Tibial artery (tissue), 4 donors: ENCODE measurements at regions of chr7 and their contacts with region 1.

Region 1: GRCh38 chr7:26143298-26144048 is 8.5 kb upstream of the NFE2L3 start:
- DNase-seq: no peak
- H3K4me3 ChIP-seq: no peak overlapping the region
- H3K27ac ChIP-seq: no peak overlapping the region
- H3K4me1 ChIP-seq: peaks cover 0 to 5% (median 0%) of the 10 kb centered on the region in 4 donors
- H3K27me3 ChIP-seq: no peaks in the 10 kb centered on the region
- CTCF ChIP-seq: no peak

Region 2: DNA sequence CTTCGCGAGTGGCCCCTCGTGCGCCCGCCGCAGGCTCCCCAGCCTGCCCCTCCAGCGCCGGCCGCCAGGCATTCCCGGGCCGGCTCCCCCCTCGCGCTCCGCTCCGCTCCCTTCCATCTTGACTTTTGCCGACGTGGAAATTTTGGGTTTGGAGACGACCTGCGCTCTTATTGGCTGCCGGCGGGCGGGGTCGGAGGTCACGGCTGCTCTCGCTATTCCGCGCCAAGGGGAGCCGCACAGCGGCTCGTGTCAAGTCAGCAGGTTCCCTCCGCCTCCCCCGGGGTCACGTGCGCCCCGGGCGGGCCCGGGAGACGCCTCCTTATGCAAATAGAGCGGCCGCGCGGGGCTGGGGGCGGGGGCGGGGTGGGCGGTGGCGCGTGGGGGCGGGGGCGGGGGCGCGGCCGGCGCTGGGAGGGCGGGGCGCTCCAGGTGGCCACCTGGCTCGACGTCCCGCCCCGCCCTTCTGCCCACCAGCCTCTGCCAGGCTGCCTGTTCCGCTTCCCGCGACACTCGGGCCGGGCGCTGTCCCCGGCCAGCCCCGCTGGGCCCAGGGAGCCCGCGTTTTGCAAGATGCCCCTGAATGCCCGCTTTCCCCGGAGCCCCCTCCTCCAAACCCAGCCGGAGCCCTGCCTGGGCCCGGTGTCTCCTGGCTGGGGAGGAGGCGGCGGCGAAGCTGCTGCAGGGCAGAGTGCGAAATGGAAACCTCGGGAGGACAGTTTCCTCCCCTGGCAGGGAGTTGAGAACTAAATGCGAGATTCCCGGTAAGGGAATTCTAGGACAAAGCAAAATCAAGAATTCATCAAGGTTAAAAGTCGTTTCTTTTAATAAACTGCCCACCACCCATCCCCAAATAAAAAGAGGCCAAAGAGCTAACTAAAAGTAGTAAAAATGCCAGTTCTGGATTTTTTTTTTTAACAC is 192.2 kb before region 1 on chr7:
- intact Hi-C with region 1: no loop called
- DNase-seq: peak; percentile 88 to 90
- H3K4me3 ChIP-seq: peak overlapping the region; percentile 51 to 85
- H3K27ac ChIP-seq: peak overlapping the region; percentile 24 to 62
- H3K4me1 ChIP-seq: peaks cover 0 to 26% (median 18%) of the 10 kb centered on the region in 4 donors
- H3K27me3 ChIP-seq: peaks cover 0 to 5% of the 10 kb centered on the region in 2 donors
- CTCF ChIP-seq: no peak

Region 3: DNA sequence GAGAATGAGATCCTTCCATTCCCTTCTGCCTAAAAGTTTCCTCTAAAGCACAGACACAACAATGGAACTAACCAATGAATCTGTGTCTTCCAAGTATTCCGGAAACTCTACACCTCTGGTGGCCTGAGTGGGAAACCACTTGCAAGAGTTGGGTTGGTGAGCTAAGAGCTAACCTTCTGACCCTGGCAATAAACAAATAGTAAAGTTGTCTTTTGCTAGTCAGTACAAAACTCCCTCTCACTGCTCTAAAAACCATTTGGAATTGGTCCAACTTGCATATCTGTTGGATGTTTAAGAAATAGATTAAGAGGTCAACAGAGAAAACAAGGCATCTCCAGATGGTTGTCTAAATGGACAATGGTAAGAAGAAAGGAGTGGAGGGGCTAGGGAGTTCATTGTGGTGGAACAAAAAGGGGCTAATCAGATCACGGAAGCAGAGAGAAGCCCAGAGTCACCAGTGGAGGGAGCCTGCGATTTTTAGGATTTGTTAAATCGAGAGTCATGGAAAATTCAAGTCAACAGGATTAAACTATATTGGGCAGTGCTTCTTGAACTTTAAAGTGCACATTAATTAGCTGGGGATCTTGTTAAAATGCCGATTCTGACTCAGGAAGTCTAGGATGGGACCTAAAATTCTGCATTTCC is 1291.4 kb after region 1 on chr7:
- intact Hi-C with region 1: loop called (anchors 10 kb)
- DNase-seq: no peak
- H3K4me3 ChIP-seq: no peak overlapping the region
- H3K27ac ChIP-seq: no peak overlapping the region
- H3K4me1 ChIP-seq: no peaks in the 10 kb centered on the region
- H3K27me3 ChIP-seq: no peaks in the 10 kb centered on the region
- CTCF ChIP-seq: no peak